Cardiac septum (tissue), 1 donor: ENCODE measurements at regions of chr6 and their contacts with region 1.

Region 1: GRCh38 chr6:105352037-105352617 is 50.8 kb downstream of the PREP start:
- DNase-seq: no peak

Region 2: GRCh38 chr6:104983281-104983680 is 368.8 kb before region 1 on chr6:
- intact Hi-C with region 1: no loop called
- DNase-seq: no peak

Region 3: DNA sequence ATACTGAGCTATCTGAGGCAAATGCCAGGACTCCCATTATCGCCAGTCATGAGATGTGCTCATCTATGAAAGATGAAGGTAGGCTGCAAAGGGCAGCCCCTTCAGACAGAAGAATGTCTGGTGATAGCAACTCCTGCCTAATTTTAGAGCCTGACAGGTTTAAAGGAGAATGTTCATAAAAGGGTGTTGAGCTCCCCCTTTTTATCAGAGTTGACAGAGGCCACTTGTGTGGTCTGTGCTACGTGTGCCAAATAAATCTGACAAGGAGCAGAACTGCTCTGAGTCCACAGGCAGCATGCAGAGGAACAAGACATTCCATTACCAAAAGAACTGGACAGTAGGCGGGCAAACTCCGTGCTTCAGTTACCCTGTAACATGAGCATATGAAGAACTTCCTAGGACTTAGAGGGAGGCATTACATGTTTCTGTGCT is 51.0 kb before region 1 on chr6:
- intact Hi-C with region 1: loop called (anchors 5 kb)
- DNase-seq: no peak

Region 4: GRCh38 chr6:105474234-105474633 is 122.1 kb after region 1 on chr6:
- intact Hi-C with region 1: no loop called
- DNase-seq: no peak